Breast epithelium (tissue), 4 donors: ENCODE measurements at regions of chr16 and their contacts with region 1.

Region 1: GRCh38 chr16:87681981-87682570 is 79.8 kb downstream of the JPH3 start:
- DNase-seq: no peak
- H3K4me3 ChIP-seq: no peak overlapping the region
- H3K27ac ChIP-seq: no peak overlapping the region
- H3K4me1 ChIP-seq: no peaks in the 10 kb centered on the region
- H3K27me3 ChIP-seq: peaks cover 3 to 62% of the 10 kb centered on the region in 2 donors
- CTCF ChIP-seq: no peak
- POLR2A ChIP-seq: no peak

Region 2: GRCh38 chr16:87615621-87616041 is 66.4 kb before region 1 on chr16:
- intact Hi-C with region 1: loop called (anchors 2 kb)
- DNase-seq: no peak
- H3K4me3 ChIP-seq: no peak overlapping the region
- H3K27ac ChIP-seq: no peak overlapping the region
- H3K4me1 ChIP-seq: no peaks in the 10 kb centered on the region
- H3K27me3 ChIP-seq: peaks cover 0 to 55% of the 10 kb centered on the region in 2 donors
- CTCF ChIP-seq: no peak
- POLR2A ChIP-seq: no peak